ENCODE measurements at regions of chr5 and their contacts with region 1.

Region 1: GRCh38 chr5:33299621-33300208 is 141.1 kb upstream of the TARS1 start:
- DNase-seq: peak; percentile 72
- ATAC-seq: peak; percentile 82
- H3K4me3 ChIP-seq: peak overlapping the region; percentile 21; the same call in 1 of the 2 replicates
- H3K27ac ChIP-seq: peak overlapping the region; percentile 47
- H3K4me1 ChIP-seq: peaks cover 21% of the 10 kb centered on the region
- H3K27me3 ChIP-seq: no peaks in the 10 kb centered on the region
- CTCF ChIP-seq: peak; percentile 86

Region 2: DNA sequence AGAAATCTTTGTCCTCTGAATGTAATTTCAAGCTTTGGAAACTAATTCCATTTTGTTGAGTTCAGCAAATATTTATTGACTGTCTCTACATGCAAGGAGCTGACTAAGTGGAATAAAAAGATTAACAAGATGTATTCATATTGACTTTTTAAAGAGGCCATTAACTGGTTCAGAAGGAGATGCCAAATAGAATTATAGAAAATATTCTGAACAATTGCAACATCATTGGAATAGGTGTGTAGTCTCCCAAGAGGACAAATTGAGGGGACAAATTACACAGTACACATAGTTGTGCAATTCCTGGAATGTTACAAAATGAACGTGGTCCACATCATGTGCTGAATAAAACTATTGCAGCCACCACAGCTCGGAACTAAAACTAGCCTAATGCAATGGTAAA is 364.4 kb before region 1 on chr5:
- CTCF ChIA-PET with region 1: no interaction called
- POLR2A ChIA-PET with region 1: no interaction called
- intact Hi-C with region 1: loop called (anchors 5 kb)
- DNase-seq: no peak
- ATAC-seq: no peak
- H3K4me3 ChIP-seq: no peak overlapping the region
- H3K27ac ChIP-seq: no peak overlapping the region
- H3K4me1 ChIP-seq: no peaks in the 10 kb centered on the region
- H3K27me3 ChIP-seq: no peaks in the 10 kb centered on the region
- CTCF ChIP-seq: no peak

Region 3: GRCh38 chr5:33180900-33181299 is 118.8 kb before region 1 on chr5:
- CTCF ChIA-PET with region 1: interaction called, 5 read pairs
- POLR2A ChIA-PET with region 1: no interaction called
- intact Hi-C with region 1: loop called (anchors 1 kb)
- DNase-seq: peak; percentile 66
- ATAC-seq: peak; percentile 73
- H3K4me3 ChIP-seq: no peak overlapping the region
- H3K27ac ChIP-seq: no peak overlapping the region
- H3K4me1 ChIP-seq: 0 out of 2 replicates have a peak, but pooled peaks cover 3% of the 10 kb centered on the region
- H3K27me3 ChIP-seq: no peaks in the 10 kb centered on the region
- CTCF ChIP-seq: peak; percentile 84

Region 4: GRCh38 chr5:33241802-33242201 is 57.9 kb before region 1 on chr5:
- CTCF ChIA-PET with region 1: no interaction called
- POLR2A ChIA-PET with region 1: no interaction called
- intact Hi-C with region 1: no loop called
- DNase-seq: no peak
- ATAC-seq: no peak
- H3K4me3 ChIP-seq: no peak overlapping the region
- H3K27ac ChIP-seq: no peak overlapping the region
- H3K4me1 ChIP-seq: no peaks in the 10 kb centered on the region
- H3K27me3 ChIP-seq: no peaks in the 10 kb centered on the region
- CTCF ChIP-seq: no peak

Region 5: GRCh38 chr5:33257807-33258483 is 41.8 kb before region 1 on chr5:
- CTCF ChIA-PET with region 1: interaction called, 5 read pairs
- POLR2A ChIA-PET with region 1: no interaction called
- intact Hi-C with region 1: loop called (anchors 1 kb)
- DNase-seq: peak; percentile 79
- ATAC-seq: peak; percentile 97
- H3K4me3 ChIP-seq: no peak overlapping the region
- H3K27ac ChIP-seq: peak overlapping the region; percentile 21
- H3K4me1 ChIP-seq: peaks cover 26% of the 10 kb centered on the region
- H3K27me3 ChIP-seq: no peaks in the 10 kb centered on the region
- CTCF ChIP-seq: peak; percentile 47

Region 6: DNA sequence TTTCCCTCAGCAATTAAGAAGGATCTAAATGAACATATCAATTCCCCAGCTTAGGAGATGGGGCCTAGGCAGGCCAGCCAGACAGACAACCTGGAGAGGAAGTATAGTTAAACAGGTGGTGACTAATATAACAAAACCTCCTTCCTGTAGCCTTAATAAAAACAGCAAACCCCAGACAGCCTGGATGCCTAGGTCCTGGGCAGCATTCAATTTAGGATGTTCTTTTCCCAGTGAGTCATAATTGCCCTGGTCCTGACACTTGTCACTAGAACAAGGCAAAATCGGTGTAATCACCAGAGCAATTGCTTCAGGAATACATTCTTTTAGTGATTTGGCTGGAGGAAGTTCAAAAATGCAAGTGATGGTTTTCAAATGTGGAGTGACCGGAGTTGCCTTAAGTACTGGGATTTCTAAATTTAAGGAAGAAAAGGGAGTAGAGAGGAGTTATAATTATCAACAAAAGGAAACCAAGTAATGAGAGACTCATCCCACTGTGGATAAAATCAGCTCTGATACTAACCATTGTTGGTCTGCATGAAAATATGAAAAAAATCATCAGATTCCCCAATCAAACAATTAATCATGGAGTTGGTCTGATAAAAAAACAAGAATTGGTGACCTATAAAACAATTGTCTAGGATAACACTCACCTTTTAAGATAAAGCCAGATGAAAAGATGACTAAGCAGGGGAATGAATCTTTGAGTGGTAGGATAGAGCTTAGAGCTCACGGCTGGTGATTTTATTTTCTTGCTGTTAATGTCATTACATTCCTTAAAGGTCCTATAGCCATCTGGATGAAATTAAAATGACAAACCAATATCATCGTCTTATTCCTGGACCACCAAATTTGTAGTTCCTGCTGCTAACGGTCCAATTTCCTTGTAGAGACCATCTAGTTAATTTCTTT is 102.0 kb after region 1 on chr5:
- CTCF ChIA-PET with region 1: interaction called, 4 read pairs
- POLR2A ChIA-PET with region 1: no interaction called
- intact Hi-C with region 1: loop called (anchors 5 kb)
- DNase-seq: peak; percentile 90
- ATAC-seq: peak; percentile 97
- H3K4me3 ChIP-seq: peak overlapping the region; percentile 22; the same call in 1 of the 2 replicates
- H3K27ac ChIP-seq: peak overlapping the region; percentile 77
- H3K4me1 ChIP-seq: peaks cover 33% of the 10 kb centered on the region
- H3K27me3 ChIP-seq: no peaks in the 10 kb centered on the region
- CTCF ChIP-seq: no peak

Region 7: DNA sequence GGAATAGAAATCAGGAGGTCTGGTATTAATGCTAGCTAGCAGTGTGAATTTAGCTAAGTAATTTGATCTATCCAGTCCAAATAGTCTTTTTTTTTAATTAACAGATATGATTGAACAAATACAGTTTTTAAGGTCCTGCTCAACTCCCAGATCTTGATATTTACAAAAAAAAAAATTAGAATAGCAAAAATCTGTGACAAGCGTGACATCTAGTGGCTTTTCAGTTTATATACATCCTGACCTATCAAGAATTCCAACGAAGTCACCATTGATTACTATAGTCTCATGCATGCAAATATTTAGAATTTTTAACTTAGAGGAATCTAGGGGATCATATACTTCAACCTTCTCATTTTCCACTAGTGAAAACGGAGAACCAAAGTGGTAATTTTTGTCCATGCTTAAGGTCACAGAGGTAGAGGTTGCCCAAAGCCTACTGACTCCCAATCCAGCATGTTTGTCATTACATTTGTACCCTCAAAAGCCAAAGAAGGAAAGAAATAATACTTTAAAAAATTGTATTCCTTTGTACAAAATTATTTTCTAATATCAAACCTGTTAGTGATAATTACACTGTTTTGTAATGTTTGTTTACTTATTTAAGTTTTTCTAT is 123.4 kb after region 1 on chr5:
- CTCF ChIA-PET with region 1: interaction called, 5 read pairs
- POLR2A ChIA-PET with region 1: no interaction called
- intact Hi-C with region 1: loop called (anchors 1 kb)
- DNase-seq: peak; percentile 69
- ATAC-seq: peak; percentile 43; the same call in 1 of the 2 replicates
- H3K4me3 ChIP-seq: no peak overlapping the region
- H3K27ac ChIP-seq: no peak overlapping the region
- H3K4me1 ChIP-seq: no peaks in the 10 kb centered on the region
- H3K27me3 ChIP-seq: no peaks in the 10 kb centered on the region
- CTCF ChIP-seq: peak; percentile 73

Measured in PC-3 (cell line).